Activated CD4-positive, alpha-beta T cell treated with anti-CD3 and anti-CD28 coated beads, Interleukin-2, amount 10 ng/mL, durations not matched to agents 24 days and 14 days (primary cell): ENCODE measurements at regions of chr1 and their contacts with region 1.

Region 1: DNA sequence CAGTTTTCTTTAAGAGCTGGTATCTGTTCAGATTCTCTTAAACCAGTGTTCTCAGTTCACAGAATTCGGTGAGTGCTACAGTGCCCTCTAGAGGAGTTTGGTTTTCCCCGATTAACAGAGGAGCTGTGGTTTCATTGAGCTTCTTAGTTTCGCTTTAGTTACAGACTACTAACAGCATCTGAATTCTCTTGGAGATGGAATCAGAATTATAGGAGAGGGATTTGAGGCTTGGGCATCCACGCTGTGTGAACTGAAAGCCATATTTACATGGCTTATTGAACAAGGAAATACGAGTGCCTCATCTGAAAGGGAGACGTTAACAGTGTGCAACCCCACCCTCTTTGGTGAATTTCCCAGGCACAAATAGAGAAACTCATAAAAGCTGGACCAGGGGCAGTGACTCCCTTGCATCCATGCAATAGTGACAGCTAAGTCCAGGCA is 202.0 kb downstream of the USH2A start:
- DNase-seq: peak; percentile 73
- H3K4me3 Mint-ChIP-seq: peak overlapping the region; percentile 82
- H3K27ac Mint-ChIP-seq: no peak overlapping the region
- H3K4me1 Mint-ChIP-seq: peaks cover 4% of the 10 kb centered on the region
- H3K27me3 Mint-ChIP-seq: no peaks in the 10 kb centered on the region

Region 2: GRCh38 chr1:215710036-215710898 is 511.0 kb before region 1 on chr1:
- intact Hi-C with region 1: loop called (anchors 5 kb)
- DNase-seq: peak; percentile 65
- H3K4me3 Mint-ChIP-seq: no peak overlapping the region
- H3K27ac Mint-ChIP-seq: no peak overlapping the region
- H3K4me1 Mint-ChIP-seq: no peaks in the 10 kb centered on the region
- H3K27me3 Mint-ChIP-seq: no peaks in the 10 kb centered on the region